Dorsolateral prefrontal cortex (tissue), 120 donors: ENCODE measurements at regions of chr17 and their contacts with region 1.

Region 1: GRCh38 chr17:60743799-60744198 is 66.1 kb downstream of the BCAS3 start:
- DNase-seq: peak in 1 of 10 donors; percentile 21
- H3K4me3 ChIP-seq: peak overlapping the region in 53 of 59 donors; percentile 1 to 59 (median 30)
- H3K27ac ChIP-seq: peak overlapping the region; percentile 15 to 94 (median 81)
- H3K27me3 ChIP-seq: no peaks in the 10 kb centered on the region
- CTCF ChIP-seq: peak in 8 of 56 donors; percentile 7 to 40 (median 22)

Region 2: GRCh38 chr17:60677308-60678124 is 66.3 kb before region 1 on chr17 and contains the start of gene BCAS3:
- intact Hi-C with region 1: loop called in 1 of 2 experiments (anchors 5 kb)
- DNase-seq: peak; percentile 97 to 99 (median 99)
- H3K4me3 ChIP-seq: peak within 1 kb of the TSS; percentile 62 to 98 (median 91)
- H3K27ac ChIP-seq: peak within 1 kb of the TSS; percentile 83 to 98 (median 95)
- H3K27me3 ChIP-seq: no peaks in the 10 kb centered on the region
- CTCF ChIP-seq: peak in 13 of 56 donors; percentile 2 to 40 (median 12)
- total RNA-seq, gene BCAS3: 51.5 to 99.8 (median 76.7) TPM